ENCODE measurements at regions of chr11 and their contacts with region 1.

Region 1: GRCh38 chr11:111123463-111124398 is 121.8 kb upstream of the POU2AF2 start:
- DNase-seq: no peak
- H3K4me3 ChIP-seq: no peak overlapping the region
- H3K27ac ChIP-seq: no peak overlapping the region
- H3K4me1 ChIP-seq: no peaks in the 10 kb centered on the region
- H3K27me3 ChIP-seq: no peaks in the 10 kb centered on the region
- CTCF ChIP-seq: no peak
- POLR2A ChIP-seq: no peak

Region 2: GRCh38 chr11:111059726-111060125 is 64.0 kb before region 1 on chr11:
- intact Hi-C with region 1: loop called (anchors 2 kb)
- DNase-seq: no peak
- H3K4me3 ChIP-seq: no peak overlapping the region
- H3K27ac ChIP-seq: no peak overlapping the region
- H3K4me1 ChIP-seq: no peaks in the 10 kb centered on the region
- H3K27me3 ChIP-seq: no peaks in the 10 kb centered on the region
- CTCF ChIP-seq: no peak
- POLR2A ChIP-seq: no peak

Region 3: GRCh38 chr11:111148953-111149352 is 25.2 kb after region 1 on chr11:
- intact Hi-C with region 1: no loop called
- DNase-seq: no peak
- H3K4me3 ChIP-seq: no peak overlapping the region
- H3K27ac ChIP-seq: no peak overlapping the region
- H3K4me1 ChIP-seq: no peaks in the 10 kb centered on the region
- H3K27me3 ChIP-seq: no peaks in the 10 kb centered on the region
- CTCF ChIP-seq: no peak
- POLR2A ChIP-seq: no peak